ENCODE measurements at regions of chr15 and their contacts with region 1.

Region 1: DNA sequence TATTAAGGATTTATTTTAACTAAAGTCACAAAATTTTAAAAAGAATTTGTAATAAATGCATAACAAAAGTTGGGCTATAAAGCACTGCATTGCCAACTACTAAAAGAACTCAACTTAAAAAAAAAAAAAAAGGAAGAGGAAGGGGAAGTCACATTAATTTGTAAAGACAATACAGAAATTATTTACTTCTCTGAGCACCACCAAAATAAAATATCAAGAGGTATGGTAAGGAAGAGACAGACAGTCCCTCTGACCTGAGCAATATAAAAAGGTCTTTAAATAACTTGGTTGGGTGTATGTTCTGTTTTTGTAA is 83.5 kb downstream of the UACA start:
- H3K4me3 ChIP-seq: no peak overlapping the region
- H3K27ac ChIP-seq: no peak overlapping the region
- H3K4me1 ChIP-seq: no peaks in the 10 kb centered on the region
- CTCF ChIP-seq: no peak

Region 2: DNA sequence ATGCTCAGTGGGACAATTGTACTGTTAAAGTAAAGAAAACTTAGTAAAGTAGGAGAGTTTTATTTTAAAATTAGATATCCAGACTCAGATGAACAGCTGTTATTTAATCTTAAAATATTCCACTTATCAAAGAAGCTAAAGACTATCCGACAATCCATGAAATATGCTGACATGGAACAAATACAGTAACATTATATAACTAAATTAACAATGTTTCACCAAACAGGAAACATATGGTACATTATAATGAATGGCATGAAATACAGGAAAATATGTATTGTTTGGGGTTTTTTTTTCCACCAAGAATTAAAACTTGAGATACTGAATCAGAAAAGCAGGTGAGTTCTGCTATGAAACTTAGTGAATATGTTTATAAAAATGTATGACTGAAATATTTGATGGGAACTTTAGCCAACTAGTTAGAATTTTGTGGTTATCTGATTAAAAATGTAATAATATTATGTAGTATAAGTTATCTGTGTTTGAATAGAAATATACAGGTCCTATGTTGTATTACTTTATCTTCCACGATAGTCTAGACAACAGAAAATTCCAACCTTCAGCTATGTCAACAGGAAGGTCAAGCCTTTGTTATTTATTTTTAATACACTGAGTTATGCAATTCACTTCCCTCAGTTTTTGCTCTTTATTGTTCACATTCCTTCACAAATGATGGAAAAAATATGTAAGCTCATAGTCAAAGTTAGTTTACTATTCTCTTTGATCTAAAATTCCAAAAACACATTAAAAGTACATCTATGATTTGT is 10.8 kb after region 1 on chr15:
- CTCF ChIA-PET with region 1: interaction called, 11 read pairs
- POLR2A ChIA-PET with region 1: no interaction called
- H3K4me3 ChIP-seq: no peak overlapping the region
- H3K27ac ChIP-seq: no peak overlapping the region
- H3K4me1 ChIP-seq: peaks cover 7% of the 10 kb centered on the region; the same call in 1 of the 2 replicates
- CTCF ChIP-seq: no peak

Region 3: DNA sequence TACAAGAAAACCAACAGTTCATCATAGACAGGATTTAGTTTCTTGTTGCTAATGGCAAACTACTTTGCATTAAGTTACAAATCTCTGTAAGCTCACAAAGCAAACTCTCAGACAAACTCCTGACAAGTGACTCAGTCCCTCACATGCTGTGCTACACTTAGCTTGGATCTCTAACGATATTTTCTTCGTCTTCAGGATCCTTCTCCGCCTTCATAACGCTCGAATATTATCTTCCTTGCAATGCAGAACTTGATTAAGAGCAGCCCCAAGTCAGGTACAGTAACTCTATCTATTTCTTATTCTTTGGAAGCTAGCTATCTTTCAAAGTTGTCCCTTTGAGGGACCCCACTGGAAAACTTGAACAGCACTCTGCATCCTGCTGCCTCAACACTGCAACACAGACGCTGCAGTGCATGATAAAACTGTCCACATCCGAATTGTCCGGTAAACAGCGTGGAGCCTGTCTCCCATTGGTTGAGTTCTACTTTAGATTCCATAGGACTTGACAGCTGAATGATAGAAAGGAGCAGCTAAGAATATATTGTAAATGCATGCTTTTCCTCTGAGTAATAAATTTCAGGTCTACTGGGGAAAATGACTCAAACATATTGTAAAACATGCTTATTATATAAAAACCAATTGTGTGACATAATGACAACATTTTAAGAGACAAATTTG is 22.2 kb after region 1 on chr15:
- CTCF ChIA-PET with region 1: interaction called, 49 read pairs
- POLR2A ChIA-PET with region 1: interaction called, 3 read pairs
- H3K4me3 ChIP-seq: peak overlapping the region; percentile 38
- H3K27ac ChIP-seq: peak overlapping the region; percentile 32
- H3K4me1 ChIP-seq: peaks cover 56% of the 10 kb centered on the region
- CTCF ChIP-seq: no peak

Region 4: DNA sequence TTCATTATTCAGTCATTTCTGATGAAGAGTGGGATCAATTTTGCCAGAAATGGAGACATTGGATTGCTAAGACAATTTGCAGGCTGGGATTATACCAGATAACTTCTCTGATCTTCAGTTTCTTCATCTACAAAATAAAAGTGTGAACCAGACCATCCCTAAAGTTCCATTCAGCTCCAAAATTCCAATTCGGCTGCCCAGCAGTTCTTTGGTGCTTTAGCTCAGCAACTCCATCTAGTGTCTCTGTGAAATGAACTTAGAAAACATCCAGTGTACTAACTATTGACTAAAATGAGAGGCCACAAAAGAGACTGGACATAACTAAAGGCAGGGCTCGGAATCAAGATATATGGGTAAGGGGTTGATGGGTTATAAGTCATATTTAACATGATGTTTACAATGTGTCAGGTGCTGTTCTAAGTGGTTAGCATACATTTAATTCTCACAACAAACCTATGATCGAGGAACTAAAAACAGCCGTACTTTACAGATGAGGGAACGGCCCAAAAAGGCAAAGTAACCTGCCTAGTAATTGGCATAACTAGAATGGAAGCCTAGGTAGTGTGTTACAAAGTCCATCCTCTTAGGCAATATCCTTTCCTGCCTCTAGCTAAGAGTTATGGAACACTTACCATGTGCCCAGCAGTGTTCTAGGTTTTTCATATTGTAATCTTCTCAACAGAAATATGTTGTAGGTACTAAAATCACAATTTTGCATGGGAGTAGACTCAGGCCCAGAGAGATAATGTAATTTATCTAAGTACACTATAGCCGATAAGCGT is 195.3 kb after region 1 on chr15:
- CTCF ChIA-PET with region 1: interaction called, 10 read pairs
- POLR2A ChIA-PET with region 1: no interaction called
- H3K4me3 ChIP-seq: no peak overlapping the region
- H3K27ac ChIP-seq: no peak overlapping the region
- H3K4me1 ChIP-seq: no peaks in the 10 kb centered on the region
- CTCF ChIP-seq: peak; percentile 72